ENCODE measurements at regions of chr7 and their contacts with region 1.

Region 1: GRCh38 chr7:116802746-116803152 is 59.6 kb upstream of the CAPZA2 start:
- DNase-seq: no peak
- H3K4me3 ChIP-seq: no peak overlapping the region
- H3K27ac ChIP-seq: no peak overlapping the region
- H3K27me3 ChIP-seq: no peaks in the 10 kb centered on the region
- CTCF ChIP-seq: peak; percentile 55

Region 2: GRCh38 chr7:116671681-116672595 is 130.8 kb before region 1 on chr7 and contains the start of gene MET:
- CTCF ChIA-PET with region 1: interaction called, 14 read pairs
- POLR2A ChIA-PET with region 1: no interaction called
- DNase-seq: peak; percentile 21
- H3K4me3 ChIP-seq: peak within 1 kb of the TSS; percentile 83
- H3K27ac ChIP-seq: peak within 1 kb of the TSS; percentile 25
- H3K27me3 ChIP-seq: no peaks in the 10 kb centered on the region
- CTCF ChIP-seq: peak; percentile 68
- polyA plus RNA-seq, gene MET: 15.5 and 20.8 TPM in 2 replicates

Region 3: DNA sequence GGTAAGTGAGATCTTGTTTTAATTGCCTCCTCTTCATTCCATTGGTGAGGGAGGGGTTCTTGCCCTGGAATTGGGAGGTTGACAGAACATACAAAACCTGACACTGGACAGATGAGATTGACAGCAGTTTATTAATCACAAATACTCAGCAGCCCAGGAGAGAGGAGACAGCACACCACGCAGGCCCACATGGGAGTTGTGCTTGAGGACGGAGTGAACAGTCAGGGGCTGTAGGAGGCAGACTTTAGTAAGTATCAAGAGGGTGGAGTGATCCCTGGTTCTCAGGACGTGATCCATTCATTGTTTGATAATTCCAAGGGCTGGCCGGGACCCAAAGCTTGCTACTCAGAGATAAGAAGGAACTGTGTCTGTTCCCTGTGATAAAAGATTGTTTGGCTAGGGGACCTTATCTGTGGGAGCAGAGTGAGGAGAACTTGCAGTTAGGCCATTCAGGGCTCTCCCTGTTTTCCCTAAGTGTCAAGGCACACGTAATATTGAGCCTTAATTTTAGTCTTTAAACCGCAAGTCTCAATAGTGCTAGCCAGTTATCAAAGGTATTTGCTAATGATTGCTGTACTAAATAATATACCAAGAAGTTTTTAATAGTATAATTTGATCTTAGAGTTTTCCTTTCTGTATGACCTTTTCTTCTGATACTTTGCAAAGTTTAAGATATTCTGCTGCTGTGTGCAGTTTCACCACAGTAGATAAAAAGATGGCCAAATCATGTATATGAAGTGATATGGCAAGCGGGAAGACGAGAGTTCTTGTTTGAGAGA is 74.1 kb after region 1 on chr7:
- CTCF ChIA-PET with region 1: no interaction called
- POLR2A ChIA-PET with region 1: no interaction called
- DNase-seq: no peak
- H3K4me3 ChIP-seq: no peak overlapping the region
- H3K27ac ChIP-seq: no peak overlapping the region
- H3K27me3 ChIP-seq: no peaks in the 10 kb centered on the region
- CTCF ChIP-seq: no peak

Measured in AG04450 (cell line).